B cell (primary cell): ENCODE measurements at regions of chr12 and their contacts with region 1.

Region 1: GRCh38 chr12:9750276-9751203 is 10.2 kb downstream of the CD69 start:
- DNase-seq: peak; percentile 86
- ATAC-seq: peak; percentile 84
- H3K4me3 ChIP-seq: no peak overlapping the region
- H3K4me3 Mint-ChIP-seq: peak overlapping the region; percentile 20
- H3K27ac ChIP-seq: no peak overlapping the region
- H3K27ac Mint-ChIP-seq: no peak overlapping the region
- H3K4me1 ChIP-seq: peaks cover 7 to 13% of the 10 kb centered on the region in 2 donors
- H3K4me1 Mint-ChIP-seq: peaks cover 30% of the 10 kb centered on the region
- H3K27me3 ChIP-seq: no peaks in the 10 kb centered on the region
- H3K27me3 Mint-ChIP-seq: no peaks in the 10 kb centered on the region
- CTCF ChIP-seq: peak; percentile 91

Region 2: DNA sequence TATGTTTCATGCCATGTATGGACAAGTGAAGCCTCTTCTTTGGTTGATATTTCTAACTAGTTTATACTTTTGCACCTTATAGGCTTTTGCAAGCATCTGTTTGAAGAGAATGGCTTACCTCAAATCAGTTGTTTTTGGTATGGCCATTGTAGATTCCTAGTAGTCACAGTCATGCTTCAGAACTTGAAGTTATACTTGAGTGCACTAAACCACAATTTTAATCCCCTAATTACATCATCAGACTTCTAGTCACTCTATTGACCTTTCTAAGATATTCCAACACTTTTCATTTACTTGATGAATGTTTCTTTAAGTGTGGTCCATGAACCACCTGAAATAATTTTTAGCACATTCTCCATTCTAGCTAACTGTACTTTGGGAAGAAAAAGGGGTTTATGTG is 124.2 kb before region 1 on chr12:
- CTCF ChIA-PET with region 1: interaction called, 113 read pairs
- POLR2A ChIA-PET with region 1: no interaction called
- intact Hi-C with region 1: no loop called
- DNase-seq: no peak
- ATAC-seq: no peak
- H3K4me3 ChIP-seq: no peak overlapping the region
- H3K4me3 Mint-ChIP-seq: no peak overlapping the region
- H3K27ac ChIP-seq: no peak overlapping the region
- H3K27ac Mint-ChIP-seq: no peak overlapping the region
- H3K4me1 ChIP-seq: no peaks in the 10 kb centered on the region
- H3K4me1 Mint-ChIP-seq: peaks cover 15% of the 10 kb centered on the region
- H3K27me3 ChIP-seq: no peaks in the 10 kb centered on the region
- H3K27me3 Mint-ChIP-seq: no peaks in the 10 kb centered on the region
- CTCF ChIP-seq: no peak

Region 3: GRCh38 chr12:9673404-9674225 is 76.9 kb before region 1 on chr12:
- CTCF ChIA-PET with region 1: interaction called, 15 read pairs
- POLR2A ChIA-PET with region 1: no interaction called
- intact Hi-C with region 1: no loop called
- DNase-seq: peak; percentile 56
- ATAC-seq: peak; percentile 32
- H3K4me3 ChIP-seq: peak overlapping the region in 3 of 5 experiments; percentile 63 to 77 (median 69)
- H3K4me3 Mint-ChIP-seq: peak overlapping the region; percentile 91
- H3K27ac ChIP-seq: peak overlapping the region; percentile 28 to 87
- H3K27ac Mint-ChIP-seq: peak overlapping the region; percentile 86
- H3K4me1 ChIP-seq: peaks cover 60 to 70% of the 10 kb centered on the region in 2 donors
- H3K4me1 Mint-ChIP-seq: peaks cover 77% of the 10 kb centered on the region
- H3K27me3 ChIP-seq: no peaks in the 10 kb centered on the region
- H3K27me3 Mint-ChIP-seq: no peaks in the 10 kb centered on the region
- CTCF ChIP-seq: no peak

Region 4: GRCh38 chr12:9707864-9708808 is 42.4 kb before region 1 on chr12:
- CTCF ChIA-PET with region 1: interaction called, 26 read pairs
- POLR2A ChIA-PET with region 1: no interaction called
- intact Hi-C with region 1: no loop called
- DNase-seq: peak; percentile 77
- ATAC-seq: peak; percentile 59
- H3K4me3 ChIP-seq: peak overlapping the region in 3 of 5 experiments; percentile 19 to 47 (median 31)
- H3K4me3 Mint-ChIP-seq: peak overlapping the region; percentile 35
- H3K27ac ChIP-seq: peak overlapping the region; percentile 72 to 92
- H3K27ac Mint-ChIP-seq: peak overlapping the region; percentile 89
- H3K4me1 ChIP-seq: peaks cover 76 to 78% of the 10 kb centered on the region in 2 donors
- H3K4me1 Mint-ChIP-seq: peaks cover 84% of the 10 kb centered on the region
- H3K27me3 ChIP-seq: no peaks in the 10 kb centered on the region
- H3K27me3 Mint-ChIP-seq: no peaks in the 10 kb centered on the region
- CTCF ChIP-seq: peak; percentile 76

Region 5: GRCh38 chr12:9760699-9761418 is 10.3 kb after region 1 on chr12 and contains the start of gene CD69:
- CTCF ChIA-PET with region 1: interaction called, 102 read pairs
- POLR2A ChIA-PET with region 1: interaction called, 6 read pairs
- intact Hi-C with region 1: loop called (anchors 1 kb)
- DNase-seq: peak; percentile 95
- ATAC-seq: peak; percentile 59
- H3K4me3 ChIP-seq: peak within 1 kb of the TSS; percentile 46 to 100 (median 75)
- H3K4me3 Mint-ChIP-seq: peak within 1 kb of the TSS; percentile 96
- H3K27ac ChIP-seq: peak within 1 kb of the TSS; percentile 89 to 93
- H3K27ac Mint-ChIP-seq: peak within 1 kb of the TSS; percentile 99
- H3K4me1 ChIP-seq: peaks cover 58 to 63% of the 10 kb centered on the region in 2 donors
- H3K4me1 Mint-ChIP-seq: peaks cover 69% of the 10 kb centered on the region
- H3K27me3 ChIP-seq: no peaks in the 10 kb centered on the region
- H3K27me3 Mint-ChIP-seq: no peaks in the 10 kb centered on the region
- CTCF ChIP-seq: no peak
- total RNA-seq, gene CD69: 44.8 and 45.1 TPM in 2 replicates

Region 6: GRCh38 chr12:9813821-9814809 is 63.6 kb after region 1 on chr12:
- CTCF ChIA-PET with region 1: interaction called, 118 read pairs
- POLR2A ChIA-PET with region 1: no interaction called
- intact Hi-C with region 1: no loop called
- DNase-seq: peak; percentile 88
- ATAC-seq: peak; percentile 97
- H3K4me3 ChIP-seq: peak overlapping the region in 4 of 5 experiments; percentile 33 to 63 (median 48)
- H3K4me3 Mint-ChIP-seq: peak overlapping the region; percentile 77
- H3K27ac ChIP-seq: no peak overlapping the region
- H3K27ac Mint-ChIP-seq: no peak overlapping the region
- H3K4me1 ChIP-seq: peaks cover 10 to 23% of the 10 kb centered on the region in 2 donors
- H3K4me1 Mint-ChIP-seq: peaks cover 21% of the 10 kb centered on the region
- H3K27me3 ChIP-seq: peaks cover 0 to 9% (median 0%) of the 10 kb centered on the region in 4 experiments
- H3K27me3 Mint-ChIP-seq: peaks cover 23% of the 10 kb centered on the region
- CTCF ChIP-seq: peak; percentile 93

Region 7: DNA sequence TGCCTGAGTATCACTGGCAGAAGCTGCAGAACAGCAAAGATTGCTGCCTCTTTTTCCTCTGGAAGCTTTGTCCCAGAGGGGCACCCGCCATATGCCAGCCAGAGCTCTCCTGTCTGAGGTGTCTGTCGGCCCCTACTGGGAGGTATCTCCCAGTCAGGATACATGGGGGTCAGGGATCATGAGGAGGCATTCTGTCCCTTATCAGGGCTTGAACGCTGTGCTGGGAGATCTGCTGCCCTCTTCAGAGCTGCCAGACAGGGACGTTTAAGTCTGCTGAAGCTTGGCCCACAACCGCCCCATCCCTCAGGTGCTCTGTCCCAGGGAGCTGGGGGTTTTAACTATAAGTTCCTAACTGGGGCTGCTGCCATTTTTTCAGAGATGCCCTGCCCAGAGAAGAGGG is 98.4 kb after region 1 on chr12:
- CTCF ChIA-PET with region 1: no interaction called
- POLR2A ChIA-PET with region 1: no interaction called
- intact Hi-C with region 1: no loop called
- DNase-seq: no peak
- ATAC-seq: no peak
- H3K4me3 ChIP-seq: no peak overlapping the region
- H3K4me3 Mint-ChIP-seq: no peak overlapping the region
- H3K27ac ChIP-seq: no peak overlapping the region
- H3K27ac Mint-ChIP-seq: no peak overlapping the region
- H3K4me1 ChIP-seq: no peaks in the 10 kb centered on the region
- H3K4me1 Mint-ChIP-seq: no peaks in the 10 kb centered on the region
- H3K27me3 ChIP-seq: no peaks in the 10 kb centered on the region
- H3K27me3 Mint-ChIP-seq: no peaks in the 10 kb centered on the region
- CTCF ChIP-seq: no peak

Region 8: DNA sequence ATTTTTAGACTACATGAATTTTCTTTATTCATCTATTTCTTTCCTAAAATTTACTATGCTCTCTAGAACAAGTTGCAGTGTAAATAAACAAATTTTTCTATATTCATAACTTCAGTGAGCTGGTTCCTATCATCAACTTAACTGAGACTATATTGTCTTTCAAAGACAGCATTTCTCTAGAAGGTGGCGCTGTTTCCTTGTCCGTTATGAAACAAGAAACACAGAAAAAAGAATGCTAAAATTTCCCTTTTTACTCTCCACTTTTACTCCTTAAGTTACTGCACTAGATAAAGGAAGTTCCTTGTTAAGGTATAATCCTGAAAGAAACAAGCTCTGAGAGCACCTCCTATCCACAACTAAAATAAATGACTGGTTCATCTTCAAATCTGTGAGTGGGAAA is 189.8 kb after region 1 on chr12:
- CTCF ChIA-PET with region 1: interaction called, 6 read pairs
- POLR2A ChIA-PET with region 1: no interaction called
- intact Hi-C with region 1: loop called (anchors 5 kb)
- DNase-seq: peak; percentile 42
- ATAC-seq: no peak
- H3K4me3 ChIP-seq: no peak overlapping the region
- H3K4me3 Mint-ChIP-seq: no peak overlapping the region
- H3K27ac ChIP-seq: no peak overlapping the region
- H3K27ac Mint-ChIP-seq: no peak overlapping the region
- H3K4me1 ChIP-seq: peaks cover 11 to 24% of the 10 kb centered on the region in 2 donors
- H3K4me1 Mint-ChIP-seq: peaks cover 20% of the 10 kb centered on the region
- H3K27me3 ChIP-seq: peaks cover 0 to 7% (median 0%) of the 10 kb centered on the region in 4 experiments
- H3K27me3 Mint-ChIP-seq: peaks cover 22% of the 10 kb centered on the region
- CTCF ChIP-seq: peak; percentile 44